Mammary epithelial cell (primary cell): ENCODE measurements at regions of chr5 and their contacts with region 1.

Region 1: DNA sequence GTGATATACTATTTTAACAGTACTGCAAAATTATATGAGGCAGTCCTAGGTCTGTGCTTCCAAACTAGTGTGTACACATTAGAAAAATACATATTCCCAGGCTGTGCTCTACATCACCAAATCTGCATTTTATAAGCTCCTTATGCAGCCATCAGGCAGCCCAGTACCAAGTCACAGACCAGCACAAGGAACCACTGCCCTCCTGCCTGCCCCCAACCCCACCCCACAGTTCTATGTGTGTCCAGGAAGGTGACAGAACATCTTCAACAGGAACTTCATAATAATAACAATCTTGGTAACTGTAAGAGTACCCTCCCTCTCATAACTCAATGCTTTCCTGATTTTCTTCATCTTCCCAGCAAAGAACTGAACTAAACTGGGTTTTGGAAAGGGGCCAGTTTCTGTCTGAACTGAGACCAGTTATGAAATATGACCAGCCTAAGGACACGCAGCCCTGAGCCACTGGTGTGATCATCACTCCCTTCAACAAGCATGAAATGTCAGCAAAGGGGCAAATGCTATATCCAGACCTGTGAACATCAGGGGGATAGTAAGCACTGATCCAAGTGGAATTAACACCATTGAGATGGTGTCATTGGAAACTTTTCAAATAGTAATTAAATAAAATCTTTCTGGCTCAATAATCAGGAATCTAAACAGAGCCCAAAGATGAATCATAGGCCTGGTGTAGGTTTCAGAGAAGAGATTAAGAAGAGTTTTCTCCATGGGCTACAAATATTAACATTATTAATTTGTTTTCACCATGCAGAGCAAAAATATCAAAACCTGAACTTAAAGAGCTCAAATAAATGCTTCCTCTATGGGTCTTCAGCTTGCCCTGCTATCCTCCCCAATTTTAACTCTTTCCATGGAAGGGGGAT is 82.1 kb downstream of the DPYSL3 start:
- DNase-seq: peak; percentile 8
- H3K4me3 ChIP-seq: no peak overlapping the region
- H3K27ac ChIP-seq: no peak overlapping the region
- H3K4me1 ChIP-seq: no peaks in the 10 kb centered on the region
- H3K27me3 ChIP-seq: no peaks in the 10 kb centered on the region
- CTCF ChIP-seq: no peak

Region 2: DNA sequence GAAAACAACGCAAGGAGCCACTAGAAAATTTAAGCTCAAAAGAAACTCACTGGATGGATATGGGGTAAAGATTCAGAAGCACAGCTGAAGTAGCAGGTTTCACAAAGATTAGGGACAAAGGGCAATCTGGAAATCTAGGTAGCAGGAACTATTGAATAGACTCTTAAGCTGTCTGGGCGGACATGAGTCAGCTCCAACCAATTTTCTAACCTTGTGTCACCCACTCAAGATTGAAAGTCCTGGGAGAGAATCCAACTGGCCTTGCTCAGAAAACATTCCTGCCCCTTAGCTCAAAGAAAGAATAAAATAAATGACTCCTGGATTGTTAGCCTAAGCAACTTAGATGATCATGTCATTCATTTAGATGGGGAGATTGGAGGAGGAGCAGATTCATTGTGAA is 123.8 kb before region 1 on chr5:
- CTCF ChIA-PET with region 1: no interaction called
- dilution Hi-C with region 1: no loop called
- in situ Hi-C with region 1: no loop called
- intact Hi-C with region 1: no loop called
- DNase-seq: peak; percentile 69
- H3K4me3 ChIP-seq: no peak overlapping the region
- H3K27ac ChIP-seq: no peak overlapping the region
- H3K4me1 ChIP-seq: peaks cover 10% of the 10 kb centered on the region
- H3K27me3 ChIP-seq: no peaks in the 10 kb centered on the region
- CTCF ChIP-seq: no peak

Region 3: GRCh38 chr5:147391781-147392180 is 36.0 kb before region 1 on chr5:
- CTCF ChIA-PET with region 1: no interaction called
- dilution Hi-C with region 1: loop called (anchors 5 kb)
- in situ Hi-C with region 1: no loop called
- intact Hi-C with region 1: no loop called
- DNase-seq: peak; percentile 61
- H3K4me3 ChIP-seq: no peak overlapping the region
- H3K27ac ChIP-seq: no peak overlapping the region
- H3K4me1 ChIP-seq: no peaks in the 10 kb centered on the region
- H3K27me3 ChIP-seq: no peaks in the 10 kb centered on the region
- CTCF ChIP-seq: peak; percentile 57 to 64